Sciatic nerve (tissue), 2 donors: ENCODE measurements at regions of chr12 and their contacts with region 1.

Region 1: GRCh38 chr12:76848132-76848531 is 30.7 kb downstream of the CSRP2 start:
- DNase-seq: no peak
- ATAC-seq: no peak

Region 2: DNA sequence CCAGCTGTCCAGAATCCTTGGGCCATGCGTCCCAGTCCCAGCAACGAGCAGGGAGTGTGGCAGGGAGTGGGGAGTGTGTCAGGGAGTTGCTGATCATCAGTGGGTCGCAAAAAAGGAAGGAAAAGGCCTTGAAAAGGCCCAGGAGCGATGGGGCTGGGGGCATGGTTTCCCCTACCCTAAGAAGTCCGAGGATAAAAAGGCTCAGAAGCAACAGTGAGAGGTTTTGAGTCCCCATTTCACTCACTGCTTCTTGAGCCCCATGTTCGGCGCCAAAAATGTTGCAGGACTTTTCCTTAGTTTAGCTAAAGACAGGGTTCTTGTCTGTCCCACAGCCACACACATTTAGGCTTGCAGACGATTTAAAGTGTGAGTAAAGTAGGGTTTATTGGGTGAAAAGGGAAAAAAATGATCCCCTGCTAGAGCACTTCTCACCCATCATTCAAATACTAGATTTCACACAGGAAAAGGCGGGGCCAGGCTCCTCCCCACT is 1828.0 kb before region 1 on chr12:
- intact Hi-C with region 1: loop called (anchors 5 kb)
- DNase-seq: no peak
- ATAC-seq: no peak

Region 3: DNA sequence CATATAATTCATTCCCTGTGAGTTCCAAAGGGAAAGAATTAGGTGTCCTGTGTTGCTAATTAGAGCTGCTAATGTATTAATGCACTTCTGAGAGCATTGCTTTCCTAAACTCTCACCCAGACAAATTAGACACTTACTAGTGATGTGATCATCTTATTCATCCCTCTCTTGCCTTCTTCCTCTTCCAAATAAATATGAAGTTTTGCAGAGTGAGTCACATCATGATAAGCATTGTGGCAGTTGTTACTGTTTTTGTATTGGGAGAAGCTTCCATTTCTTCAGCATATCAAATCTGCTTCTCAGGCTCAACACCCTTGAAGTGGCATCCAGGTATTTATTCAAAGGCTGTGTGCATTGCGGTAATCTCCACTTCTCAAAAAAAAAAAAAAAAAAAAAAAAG is 254.6 kb after region 1 on chr12:
- intact Hi-C with region 1: no loop called
- DNase-seq: no peak
- ATAC-seq: no peak